Heart left ventricle (tissue), 16 donors: ENCODE measurements at regions of chr2 and their contacts with region 1.

Region 1: DNA sequence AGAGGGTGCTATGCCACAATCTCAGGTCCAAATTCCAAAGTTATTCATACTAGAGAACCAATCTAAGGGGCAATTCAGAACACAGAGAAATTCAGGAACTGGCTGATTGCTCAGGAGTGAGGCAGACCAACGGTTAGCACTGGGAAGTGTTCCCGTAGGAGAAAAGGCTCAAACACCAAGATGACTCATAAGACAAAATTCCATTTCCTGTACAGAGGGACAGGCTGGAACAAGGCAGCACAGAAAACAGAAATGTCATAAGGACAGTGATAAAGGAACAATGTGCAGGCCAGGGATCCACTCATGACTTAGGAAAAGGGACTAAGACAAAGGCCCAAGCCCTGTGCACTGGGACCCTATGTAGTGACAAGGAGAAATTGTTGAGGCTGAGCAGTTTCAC is 54.2 kb downstream of the PDE1A start:
- DNase-seq: peak in 4 of 5 donors; percentile 23 to 42 (median 36)
- ATAC-seq: peak; percentile 91 to 96 (median 95)
- H3K4me3 ChIP-seq: no peak overlapping the region
- H3K27ac ChIP-seq: peak overlapping the region; percentile 51 to 84 (median 76)
- H3K4me1 ChIP-seq: peaks cover 0 to 32% (median 11%) of the 10 kb centered on the region in 12 donors
- H3K27me3 ChIP-seq: no peaks in the 10 kb centered on the region
- CTCF ChIP-seq: no peak
- POLR2A ChIP-seq: no peak

Region 2: DNA sequence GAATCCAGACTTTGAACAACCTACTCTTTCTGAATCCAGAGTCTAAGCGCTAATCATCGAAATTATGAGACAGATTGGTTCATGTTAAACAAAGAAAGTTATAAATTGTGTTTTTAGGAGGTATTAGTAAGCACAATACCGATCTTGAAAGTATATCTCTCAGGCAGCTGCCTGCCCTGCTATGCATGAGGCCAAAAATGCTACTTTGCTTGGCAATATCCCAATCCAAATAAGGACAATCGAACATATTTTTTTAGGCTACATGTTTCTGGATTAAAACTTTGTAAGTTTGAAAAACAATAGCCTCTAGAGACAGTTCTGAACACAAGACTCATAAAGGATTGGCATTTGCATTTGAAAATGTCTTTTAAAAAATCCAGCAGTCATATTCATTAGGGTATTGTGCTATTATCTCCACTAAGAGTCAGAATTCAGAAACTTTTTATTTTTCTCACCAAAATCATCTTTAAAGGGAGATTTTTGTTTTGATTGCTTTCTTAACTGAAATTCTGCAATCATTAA is 113.0 kb before region 1 on chr2:
- intact Hi-C with region 1: loop called in 2 of 10 experiments (anchors 10 kb)
- DNase-seq: no peak
- ATAC-seq: peak in 1 of 4 donors; percentile 36
- H3K4me3 ChIP-seq: no peak overlapping the region
- H3K27ac ChIP-seq: peak overlapping the region in 4 of 12 donors; percentile 11 to 25 (median 16)
- H3K4me1 ChIP-seq: peaks cover 0 to 15% (median 0%) of the 10 kb centered on the region in 12 donors
- H3K27me3 ChIP-seq: no peaks in the 10 kb centered on the region
- CTCF ChIP-seq: no peak
- POLR2A ChIP-seq: no peak

Region 3: GRCh38 chr2:182393270-182393760 is 20.7 kb after region 1 on chr2:
- intact Hi-C with region 1: no loop called
- DNase-seq: no peak
- ATAC-seq: no peak
- H3K4me3 ChIP-seq: no peak overlapping the region
- H3K27ac ChIP-seq: no peak overlapping the region
- H3K4me1 ChIP-seq: peaks cover 0 to 5% (median 0%) of the 10 kb centered on the region in 12 donors
- H3K27me3 ChIP-seq: no peaks in the 10 kb centered on the region
- CTCF ChIP-seq: no peak
- POLR2A ChIP-seq: no peak

Region 4: GRCh38 chr2:182416191-182416590 is 43.5 kb after region 1 on chr2:
- intact Hi-C with region 1: loop called in 3 of 10 experiments (anchors 5 kb)
- DNase-seq: no peak
- ATAC-seq: no peak
- H3K4me3 ChIP-seq: no peak overlapping the region
- H3K27ac ChIP-seq: peak overlapping the region in 2 of 12 donors; percentile 27 to 39
- H3K4me1 ChIP-seq: peaks cover 0 to 21% (median 0%) of the 10 kb centered on the region in 12 donors
- H3K27me3 ChIP-seq: no peaks in the 10 kb centered on the region
- CTCF ChIP-seq: no peak
- POLR2A ChIP-seq: no peak